ENCODE measurements at regions of chr4 and their contacts with region 1.

Region 1: GRCh38 chr4:56641494-56642051 is 39.5 kb downstream of the HOPX start:
- DNase-seq: peak; percentile 87
- H3K4me3 ChIP-seq: no peak overlapping the region
- H3K27ac ChIP-seq: peak overlapping the region; percentile 74
- H3K4me1 ChIP-seq: peaks cover 19% of the 10 kb centered on the region
- H3K27me3 ChIP-seq: no peaks in the 10 kb centered on the region
- CTCF ChIP-seq: no peak
- POLR2A ChIP-seq: no peak

Region 2: GRCh38 chr4:56619160-56619559 is 22.4 kb before region 1 on chr4:
- CTCF ChIA-PET with region 1: interaction called, 10 read pairs
- POLR2A ChIA-PET with region 1: no interaction called
- dilution Hi-C with region 1: no loop called
- intact Hi-C with region 1: no loop called
- DNase-seq: peak; percentile 29
- H3K4me3 ChIP-seq: no peak overlapping the region
- H3K27ac ChIP-seq: no peak overlapping the region
- H3K4me1 ChIP-seq: no peaks in the 10 kb centered on the region
- H3K27me3 ChIP-seq: peaks cover 0 to 2% of the 10 kb centered on the region in 2 experiments
- CTCF ChIP-seq: no peak
- POLR2A ChIP-seq: no peak

Region 3: GRCh38 chr4:56626963-56627362 is 14.6 kb before region 1 on chr4:
- CTCF ChIA-PET with region 1: interaction called, 17 read pairs
- POLR2A ChIA-PET with region 1: no interaction called
- dilution Hi-C with region 1: no loop called
- intact Hi-C with region 1: no loop called
- DNase-seq: peak; percentile 4
- H3K4me3 ChIP-seq: no peak overlapping the region
- H3K27ac ChIP-seq: no peak overlapping the region
- H3K4me1 ChIP-seq: no peaks in the 10 kb centered on the region
- H3K27me3 ChIP-seq: no peaks in the 10 kb centered on the region
- CTCF ChIP-seq: peak in 1 of 2 donors; percentile 17
- POLR2A ChIP-seq: no peak

Region 4: GRCh38 chr4:56655209-56655626 is 13.6 kb after region 1 on chr4:
- CTCF ChIA-PET with region 1: interaction called, 25 read pairs
- POLR2A ChIA-PET with region 1: no interaction called
- dilution Hi-C with region 1: no loop called
- intact Hi-C with region 1: no loop called
- DNase-seq: no peak
- H3K4me3 ChIP-seq: peak overlapping the region; percentile 54 to 71 (median 54)
- H3K27ac ChIP-seq: no peak overlapping the region
- H3K4me1 ChIP-seq: peaks cover 22% of the 10 kb centered on the region
- H3K27me3 ChIP-seq: peaks cover 0 to 9% of the 10 kb centered on the region in 2 experiments
- CTCF ChIP-seq: no peak
- POLR2A ChIP-seq: no peak

Region 5: DNA sequence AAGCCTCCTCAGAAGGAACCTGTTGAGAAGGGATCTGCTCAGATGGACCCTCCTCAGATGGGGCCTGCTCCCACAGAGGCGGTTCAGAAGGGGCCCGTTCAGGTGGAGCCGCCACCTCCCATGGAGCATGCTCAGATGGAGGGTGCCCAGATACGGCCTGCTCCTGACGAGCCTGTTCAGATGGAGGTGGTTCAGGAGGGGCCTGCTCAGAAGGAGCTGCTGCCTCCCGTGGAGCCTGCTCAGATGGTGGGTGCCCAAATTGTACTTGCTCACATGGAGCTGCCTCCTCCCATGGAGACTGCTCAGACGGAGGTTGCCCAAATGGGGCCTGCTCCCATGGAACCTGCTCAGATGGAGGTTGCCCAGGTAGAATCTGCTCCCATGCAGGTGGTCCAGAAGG is 289.1 kb after region 1 on chr4:
- CTCF ChIA-PET with region 1: no interaction called
- POLR2A ChIA-PET with region 1: no interaction called
- dilution Hi-C with region 1: no loop called
- intact Hi-C with region 1: no loop called
- DNase-seq: no peak
- H3K4me3 ChIP-seq: no peak overlapping the region
- H3K27ac ChIP-seq: no peak overlapping the region
- H3K4me1 ChIP-seq: no peaks in the 10 kb centered on the region
- H3K27me3 ChIP-seq: no peaks in the 10 kb centered on the region
- CTCF ChIP-seq: no peak
- POLR2A ChIP-seq: no peak

Region 6: GRCh38 chr4:57037982-57038604 is 396.5 kb after region 1 on chr4:
- CTCF ChIA-PET with region 1: no interaction called
- POLR2A ChIA-PET with region 1: no interaction called
- dilution Hi-C with region 1: no loop called
- intact Hi-C with region 1: no loop called
- DNase-seq: peak; percentile 59
- H3K4me3 ChIP-seq: no peak overlapping the region
- H3K27ac ChIP-seq: no peak overlapping the region
- H3K4me1 ChIP-seq: peaks cover 9% of the 10 kb centered on the region
- H3K27me3 ChIP-seq: no peaks in the 10 kb centered on the region
- CTCF ChIP-seq: peak; percentile 88 to 90
- POLR2A ChIP-seq: no peak